Gastrocnemius medialis (tissue), 4 donors: ENCODE measurements at regions of chr1 and their contacts with region 1.

Region 1: GRCh38 chr1:10032590-10033358 is at the start of gene UBE4B:
- DNase-seq: peak; percentile 94 to 98
- ATAC-seq: peak; percentile 89 to 90
- H3K4me3 ChIP-seq: peak within 1 kb of the TSS; percentile 75 to 93 (median 86)
- H3K27ac ChIP-seq: peak within 1 kb of the TSS; percentile 92 to 98 (median 96)
- H3K4me1 ChIP-seq: peaks cover 21 to 24% of the 10 kb centered on the region in 2 donors
- H3K27me3 ChIP-seq: no peaks in the 10 kb centered on the region
- CTCF ChIP-seq: peak; percentile 79 to 93 (median 92)
- POLR2A ChIP-seq: peak; percentile 59 to 61
- total RNA-seq, gene UBE4B: 42.6 to 143 (median 98.2) TPM

Region 2: DNA sequence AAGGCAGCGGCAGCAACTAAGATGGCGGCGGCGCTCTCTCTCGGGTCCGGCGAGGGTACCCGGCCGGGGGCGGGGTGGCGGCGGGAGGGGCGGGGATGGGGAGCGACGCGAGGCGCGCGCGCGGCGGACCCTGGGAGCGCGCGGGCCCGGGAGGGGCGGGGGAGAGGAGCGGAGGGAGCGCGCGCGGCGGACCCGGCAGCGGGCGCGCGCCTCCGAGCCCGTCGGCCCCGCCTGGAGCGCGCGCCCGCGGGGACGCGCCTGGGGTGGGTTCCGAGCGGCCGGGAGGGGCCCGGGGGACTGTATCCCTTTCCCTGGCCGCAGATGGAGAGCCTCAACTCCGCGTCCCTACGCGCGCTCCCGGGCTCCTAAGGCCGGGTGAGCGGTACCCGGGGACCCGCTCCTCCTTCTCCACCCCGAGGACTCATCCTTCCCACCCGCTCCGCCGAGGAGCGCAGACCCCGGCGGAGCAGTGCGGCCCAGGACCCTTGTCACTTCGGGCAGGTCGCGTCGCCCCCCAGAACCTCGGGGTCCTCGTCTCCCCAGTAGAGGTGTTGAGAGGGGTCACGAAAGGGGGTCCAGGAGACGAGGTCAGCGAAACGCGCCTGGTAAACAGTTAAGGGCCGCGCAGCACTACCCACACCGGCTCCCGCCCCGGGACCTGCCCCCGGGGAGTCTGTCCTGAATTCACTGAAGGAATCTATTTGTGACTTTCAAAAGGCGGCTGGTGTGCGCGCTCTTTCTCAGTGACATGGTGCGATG is 208.7 kb before region 1 on chr1 and contains the start of gene CLSTN1:
- in situ Hi-C with region 1: no loop called
- intact Hi-C with region 1: loop called (anchors 1 kb)
- DNase-seq: peak; percentile 70 to 80
- ATAC-seq: peak; percentile 61 to 69
- H3K4me3 ChIP-seq: peak within 1 kb of the TSS; percentile 83 to 89 (median 86)
- H3K27ac ChIP-seq: peak within 1 kb of the TSS; percentile 94 to 99 (median 94)
- H3K4me1 ChIP-seq: peaks cover 32 to 38% of the 10 kb centered on the region in 2 donors
- H3K27me3 ChIP-seq: no peaks in the 10 kb centered on the region
- CTCF ChIP-seq: no peak
- POLR2A ChIP-seq: peak; percentile 60 to 86
- total RNA-seq, gene CLSTN1: 8.5 to 25.7 (median 22.0) TPM

Region 3: DNA sequence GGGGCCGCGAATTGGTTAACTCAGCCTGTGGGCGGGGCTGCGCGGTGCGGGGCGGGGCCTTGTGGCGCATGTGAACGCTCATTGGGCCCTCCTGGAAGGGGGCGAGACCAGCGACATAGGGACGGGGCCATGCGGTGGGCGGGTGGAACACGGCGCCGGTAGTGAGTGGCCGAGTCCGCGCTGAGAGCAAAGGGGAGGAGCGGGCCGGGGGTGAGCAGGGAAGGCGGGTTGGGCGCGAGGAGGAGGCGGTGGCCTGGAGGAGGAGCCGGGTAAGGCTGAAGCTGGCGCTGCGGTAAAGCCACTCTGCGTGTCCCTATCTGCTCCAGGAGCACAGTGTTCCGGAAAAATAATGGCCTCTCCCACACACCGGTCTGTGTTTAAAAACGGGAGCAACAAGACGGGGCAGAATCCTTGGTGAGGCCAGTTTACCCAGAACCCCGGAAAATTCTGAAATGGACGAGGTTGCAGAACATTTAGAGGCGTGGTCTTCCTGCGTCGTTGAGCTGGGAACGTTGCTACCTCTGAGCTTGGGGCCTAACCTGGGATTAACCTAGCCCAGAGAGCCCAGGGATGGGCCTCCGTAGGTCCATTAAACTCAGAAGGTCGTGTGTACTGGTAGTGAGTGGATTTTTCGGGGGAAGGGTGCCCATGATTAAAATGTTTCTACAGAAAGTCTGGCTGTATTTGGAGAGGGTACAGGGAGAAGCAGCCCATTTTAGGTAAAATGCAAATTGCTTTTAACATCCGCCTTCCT is 122.2 kb before region 1 on chr1:
- in situ Hi-C with region 1: no loop called
- intact Hi-C with region 1: loop called (anchors 1 kb)
- DNase-seq: peak; percentile 99 to 100
- ATAC-seq: peak; percentile 81 to 87
- H3K4me3 ChIP-seq: peak overlapping the region; percentile 59 to 79 (median 72)
- H3K27ac ChIP-seq: peak overlapping the region; percentile 92 to 99 (median 98)
- H3K4me1 ChIP-seq: peaks cover 27 to 29% of the 10 kb centered on the region in 2 donors
- H3K27me3 ChIP-seq: no peaks in the 10 kb centered on the region
- CTCF ChIP-seq: no peak
- POLR2A ChIP-seq: peak; percentile 74 to 90

Region 4: DNA sequence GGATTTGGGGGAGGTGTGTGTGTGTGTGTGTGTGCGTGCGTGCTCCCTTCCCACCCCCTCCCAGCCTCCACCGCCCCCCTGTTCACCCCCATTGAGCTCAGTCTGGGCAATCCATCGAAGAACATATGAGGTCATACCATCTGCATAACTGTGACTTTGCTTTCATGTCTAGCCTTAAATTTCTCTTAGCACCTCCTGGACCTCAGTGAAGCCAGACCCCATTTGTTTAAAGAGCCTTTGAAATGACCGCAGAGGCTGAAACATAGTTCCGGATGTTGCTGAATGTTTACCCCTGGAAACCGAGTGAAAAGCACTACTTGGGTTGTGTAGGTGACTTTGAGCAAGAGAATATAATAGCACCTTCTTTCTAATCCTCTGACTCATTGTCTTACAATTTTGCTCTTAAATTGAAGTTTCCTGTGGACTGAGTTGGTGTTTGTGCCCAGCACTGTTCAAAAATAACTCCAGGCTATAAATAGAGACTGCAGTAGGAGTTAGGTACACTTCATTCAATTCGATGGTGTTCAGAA is 75.4 kb after region 1 on chr1:
- in situ Hi-C with region 1: no loop called
- intact Hi-C with region 1: loop called (anchors 5 kb)
- DNase-seq: no peak
- ATAC-seq: peak; percentile 74 to 79
- H3K4me3 ChIP-seq: peak overlapping the region in 2 of 4 donors; percentile 8 to 29
- H3K27ac ChIP-seq: peak overlapping the region; percentile 79 to 90 (median 87)
- H3K4me1 ChIP-seq: peaks cover 28 to 36% of the 10 kb centered on the region in 2 donors
- H3K27me3 ChIP-seq: no peaks in the 10 kb centered on the region
- CTCF ChIP-seq: no peak
- POLR2A ChIP-seq: no peak